Activated CD8-positive, alpha-beta T cell treated with anti-CD3 and anti-CD28 coated beads for 36 hours (primary cell): ENCODE measurements at regions of chr5 and their contacts with region 1.

Region 1: DNA sequence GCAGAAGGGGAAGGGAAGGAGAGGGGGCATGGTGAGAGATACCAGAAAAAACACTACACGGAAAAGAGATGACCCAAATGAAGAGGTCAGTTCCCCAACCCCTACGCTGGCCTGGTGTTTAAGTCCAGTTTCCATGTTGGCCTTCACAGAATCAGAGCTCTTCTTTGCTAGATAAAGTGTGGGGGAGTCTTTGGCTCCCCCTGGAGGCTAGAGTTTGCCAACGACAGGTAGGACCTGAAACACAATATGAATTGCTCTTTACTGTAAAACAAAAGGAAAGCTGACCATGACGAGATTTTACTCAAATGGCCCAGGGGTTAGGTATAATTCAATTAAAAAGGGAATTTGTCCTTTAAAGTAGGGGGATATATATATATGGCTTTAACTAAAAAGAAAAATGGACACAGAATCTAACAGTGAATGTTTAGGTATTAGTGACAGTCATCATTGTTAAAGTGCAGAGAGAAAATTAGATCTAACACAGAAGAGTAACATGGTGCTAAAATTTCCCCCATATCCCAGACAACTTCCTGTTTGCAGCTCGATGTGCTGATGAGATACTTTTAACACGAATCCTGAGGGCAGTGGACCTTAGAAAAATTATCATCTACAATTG is 92.0 kb downstream of the SV2C start:
- DNase-seq: peak; percentile 73
- ATAC-seq: peak; percentile 55
- H3K4me3 Mint-ChIP-seq: no peak overlapping the region
- H3K27ac Mint-ChIP-seq: no peak overlapping the region
- H3K4me1 Mint-ChIP-seq: peaks cover 19% of the 10 kb centered on the region
- H3K27me3 Mint-ChIP-seq: no peaks in the 10 kb centered on the region
- CTCF ChIP-seq: peak; percentile 96

Region 2: DNA sequence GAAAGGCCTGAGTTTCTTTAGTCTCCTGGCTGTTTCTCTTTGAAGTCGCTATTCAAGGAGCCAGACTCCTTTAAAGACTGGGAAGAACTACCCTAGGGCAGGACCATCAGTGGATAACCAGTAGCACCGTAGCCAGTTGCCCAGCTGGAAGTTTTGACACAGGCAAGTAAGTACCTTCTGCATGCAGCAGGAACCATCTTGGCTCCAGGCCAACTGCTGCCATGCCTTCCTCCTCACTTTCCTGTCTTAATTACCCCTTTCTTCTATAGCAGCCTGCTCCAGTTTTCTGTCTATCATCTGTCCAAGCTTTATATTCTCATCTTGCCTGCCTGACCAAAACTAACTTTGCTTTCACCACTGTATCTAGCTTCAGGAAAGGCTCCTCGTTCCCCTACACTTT is 241.7 kb before region 1 on chr5:
- CTCF ChIA-PET with region 1: no interaction called
- POLR2A ChIA-PET with region 1: no interaction called
- intact Hi-C with region 1: no loop called
- DNase-seq: no peak
- ATAC-seq: no peak
- H3K4me3 Mint-ChIP-seq: no peak overlapping the region
- H3K27ac Mint-ChIP-seq: no peak overlapping the region
- H3K4me1 Mint-ChIP-seq: no peaks in the 10 kb centered on the region
- H3K27me3 Mint-ChIP-seq: peaks cover 6% of the 10 kb centered on the region
- CTCF ChIP-seq: no peak

Region 3: DNA sequence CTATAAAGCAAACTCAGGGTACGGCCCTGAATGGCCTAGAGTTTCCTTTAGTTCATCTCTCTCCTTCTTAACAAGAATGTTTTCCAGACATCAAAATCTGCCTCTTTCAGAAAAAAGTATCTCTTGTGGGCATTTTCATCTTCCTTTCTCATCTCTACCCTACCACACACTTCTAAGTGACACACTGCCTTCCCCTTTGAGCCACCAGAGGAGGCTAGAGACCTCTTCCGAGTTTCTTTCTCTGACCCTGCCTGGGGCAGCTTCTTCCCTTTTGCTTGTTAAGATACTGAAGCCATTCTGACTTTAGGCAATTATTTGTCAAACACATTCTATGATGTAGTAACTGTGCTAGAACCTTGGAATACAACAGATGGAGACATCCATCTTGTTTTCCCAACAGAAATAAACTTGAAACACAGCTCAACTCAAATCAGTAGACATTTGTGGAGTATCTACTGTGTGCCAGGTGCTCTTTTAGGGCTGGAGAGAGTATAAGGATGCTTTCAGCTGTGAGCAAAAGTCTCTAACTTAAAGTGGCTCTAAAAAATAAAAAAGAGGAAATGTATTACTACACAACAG is 100.6 kb before region 1 on chr5:
- CTCF ChIA-PET with region 1: interaction called, 18 read pairs
- POLR2A ChIA-PET with region 1: no interaction called
- intact Hi-C with region 1: no loop called
- DNase-seq: peak; percentile 46
- ATAC-seq: peak; percentile 69
- H3K4me3 Mint-ChIP-seq: no peak overlapping the region
- H3K27ac Mint-ChIP-seq: no peak overlapping the region
- H3K4me1 Mint-ChIP-seq: no peaks in the 10 kb centered on the region
- H3K27me3 Mint-ChIP-seq: peaks cover 57% of the 10 kb centered on the region
- CTCF ChIP-seq: peak; percentile 62

Region 4: GRCh38 chr5:76145945-76146344 is 29.2 kb before region 1 on chr5:
- CTCF ChIA-PET with region 1: interaction called, 19 read pairs
- POLR2A ChIA-PET with region 1: no interaction called
- intact Hi-C with region 1: no loop called
- DNase-seq: peak; percentile 21
- ATAC-seq: no peak
- H3K4me3 Mint-ChIP-seq: no peak overlapping the region
- H3K27ac Mint-ChIP-seq: no peak overlapping the region
- H3K4me1 Mint-ChIP-seq: no peaks in the 10 kb centered on the region
- H3K27me3 Mint-ChIP-seq: peaks cover 2% of the 10 kb centered on the region
- CTCF ChIP-seq: no peak

Region 5: GRCh38 chr5:76155536-76155935 is 19.6 kb before region 1 on chr5:
- CTCF ChIA-PET with region 1: interaction called, 16 read pairs
- POLR2A ChIA-PET with region 1: no interaction called
- intact Hi-C with region 1: no loop called
- DNase-seq: no peak
- ATAC-seq: no peak
- H3K4me3 Mint-ChIP-seq: no peak overlapping the region
- H3K27ac Mint-ChIP-seq: no peak overlapping the region
- H3K4me1 Mint-ChIP-seq: no peaks in the 10 kb centered on the region
- H3K27me3 Mint-ChIP-seq: peaks cover 8% of the 10 kb centered on the region
- CTCF ChIP-seq: no peak

Region 6: DNA sequence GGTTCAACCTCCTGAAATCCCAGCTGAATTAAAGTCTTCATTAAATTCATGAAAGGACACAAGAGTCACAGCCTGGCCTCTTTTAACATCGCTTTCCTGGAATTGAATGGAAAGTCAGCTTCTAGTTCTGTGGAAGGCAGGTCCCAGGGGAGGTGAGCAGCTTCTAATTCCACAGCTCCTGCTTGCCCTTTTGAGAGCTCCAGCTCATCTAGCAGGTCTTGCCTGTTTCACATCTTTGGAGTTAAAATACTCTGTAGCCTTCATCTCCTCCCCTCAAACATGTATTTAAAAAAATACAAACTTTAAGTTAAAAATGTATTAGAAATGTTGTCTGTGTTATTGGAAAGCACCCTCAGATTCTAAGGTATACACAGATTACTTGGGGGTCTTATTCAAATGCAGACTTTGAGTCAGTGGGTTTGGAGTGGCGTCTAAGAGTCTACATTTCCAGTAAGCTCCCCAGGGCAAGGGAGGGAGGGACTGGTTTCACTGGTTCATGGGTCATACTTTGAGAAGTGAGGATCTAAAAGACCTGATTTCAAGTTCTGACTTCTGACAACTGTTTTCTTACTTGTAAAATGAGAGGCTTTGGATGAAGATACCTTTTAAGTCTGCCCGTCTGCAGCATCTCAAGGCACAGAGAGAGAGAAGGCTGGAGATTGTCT is 16.8 kb after region 1 on chr5:
- CTCF ChIA-PET with region 1: interaction called, 15 read pairs
- POLR2A ChIA-PET with region 1: no interaction called
- intact Hi-C with region 1: no loop called
- DNase-seq: no peak
- ATAC-seq: no peak
- H3K4me3 Mint-ChIP-seq: no peak overlapping the region
- H3K27ac Mint-ChIP-seq: no peak overlapping the region
- H3K4me1 Mint-ChIP-seq: peaks cover 3% of the 10 kb centered on the region
- H3K27me3 Mint-ChIP-seq: peaks cover 3% of the 10 kb centered on the region
- CTCF ChIP-seq: no peak

Region 7: GRCh38 chr5:76256116-76256889 is 81.1 kb after region 1 on chr5:
- CTCF ChIA-PET with region 1: interaction called, 25 read pairs
- POLR2A ChIA-PET with region 1: no interaction called
- intact Hi-C with region 1: no loop called
- DNase-seq: peak; percentile 75
- ATAC-seq: peak; percentile 96
- H3K4me3 Mint-ChIP-seq: no peak overlapping the region
- H3K27ac Mint-ChIP-seq: no peak overlapping the region
- H3K4me1 Mint-ChIP-seq: peaks cover 7% of the 10 kb centered on the region
- H3K27me3 Mint-ChIP-seq: peaks cover 2% of the 10 kb centered on the region
- CTCF ChIP-seq: peak; percentile 83

Region 8: DNA sequence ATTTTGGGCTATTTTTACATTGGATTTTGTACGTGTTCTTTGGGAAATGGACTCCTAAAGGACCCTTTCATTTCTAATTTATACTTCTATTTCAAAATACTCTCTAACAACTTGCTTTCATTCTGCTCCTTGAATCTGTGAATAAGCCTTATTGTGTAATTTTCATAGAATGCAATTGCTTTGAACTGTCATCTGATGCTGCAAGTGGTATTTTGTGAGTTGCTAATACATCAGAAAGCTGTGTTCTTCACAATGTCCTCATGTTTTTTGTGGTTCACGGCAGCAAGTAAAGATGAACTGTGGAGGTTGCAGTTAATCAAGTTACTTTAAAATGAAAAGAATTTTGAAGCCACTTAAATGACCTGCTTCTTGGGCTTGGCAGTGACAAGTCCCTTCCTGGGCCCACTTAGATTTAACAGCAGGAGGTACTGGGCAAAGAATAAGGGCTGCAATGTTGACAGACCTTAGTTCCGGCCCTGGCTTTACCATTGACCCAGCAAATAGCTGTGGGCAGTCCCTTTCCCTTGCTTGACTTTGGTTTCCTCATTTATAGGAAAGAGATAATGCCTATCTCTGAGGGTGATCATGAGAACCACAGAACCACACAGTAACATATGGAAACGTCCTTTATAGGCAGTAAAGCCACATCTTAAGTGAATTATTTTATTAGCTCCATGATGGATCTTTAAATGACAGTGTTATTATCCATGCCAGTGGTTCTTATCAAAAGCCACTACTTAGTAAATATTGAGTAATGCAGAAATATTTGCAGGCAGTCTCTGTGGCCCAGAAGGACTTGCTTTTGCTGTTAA is 282.7 kb after region 1 on chr5:
- CTCF ChIA-PET with region 1: no interaction called
- POLR2A ChIA-PET with region 1: no interaction called
- intact Hi-C with region 1: no loop called
- DNase-seq: no peak
- ATAC-seq: no peak
- H3K4me3 Mint-ChIP-seq: no peak overlapping the region
- H3K27ac Mint-ChIP-seq: no peak overlapping the region
- H3K4me1 Mint-ChIP-seq: peaks cover 34% of the 10 kb centered on the region
- H3K27me3 Mint-ChIP-seq: no peaks in the 10 kb centered on the region
- CTCF ChIP-seq: no peak